Breast epithelium (tissue), 4 donors: ENCODE measurements at regions of chr12 and their contacts with region 1.

Region 1: DNA sequence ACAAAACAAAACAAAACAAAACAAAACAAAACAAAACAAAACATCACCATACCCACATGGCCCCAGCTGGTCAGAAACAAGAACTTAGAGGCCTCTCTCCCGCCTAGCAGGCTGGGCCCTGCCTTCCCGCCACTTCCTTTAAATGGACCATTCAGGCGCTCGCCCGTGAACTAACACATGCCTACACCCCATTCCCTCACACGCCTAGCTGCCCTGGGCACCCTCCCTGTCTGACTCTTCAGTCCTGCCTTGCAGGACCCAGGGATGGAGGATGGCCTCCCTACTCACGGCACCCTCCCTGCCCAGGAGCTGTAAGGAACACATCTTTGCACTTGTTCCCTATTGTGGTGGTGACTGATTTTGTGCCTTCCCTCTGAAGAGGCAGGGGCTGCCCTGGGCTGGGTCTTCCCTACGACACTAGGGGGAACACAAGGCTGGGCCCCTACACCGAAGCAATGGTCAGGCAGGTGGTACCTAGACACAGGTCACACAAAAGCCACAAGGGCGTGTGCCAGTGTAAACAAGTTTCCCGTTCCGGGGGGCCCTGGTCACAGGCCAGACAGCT is 21.5 kb downstream of the P2RX2 start:
- DNase-seq: no peak
- H3K4me3 ChIP-seq: no peak overlapping the region
- H3K27ac ChIP-seq: no peak overlapping the region
- H3K4me1 ChIP-seq: no peaks in the 10 kb centered on the region
- H3K27me3 ChIP-seq: no peaks in the 10 kb centered on the region
- CTCF ChIP-seq: no peak
- POLR2A ChIP-seq: no peak

Region 2: DNA sequence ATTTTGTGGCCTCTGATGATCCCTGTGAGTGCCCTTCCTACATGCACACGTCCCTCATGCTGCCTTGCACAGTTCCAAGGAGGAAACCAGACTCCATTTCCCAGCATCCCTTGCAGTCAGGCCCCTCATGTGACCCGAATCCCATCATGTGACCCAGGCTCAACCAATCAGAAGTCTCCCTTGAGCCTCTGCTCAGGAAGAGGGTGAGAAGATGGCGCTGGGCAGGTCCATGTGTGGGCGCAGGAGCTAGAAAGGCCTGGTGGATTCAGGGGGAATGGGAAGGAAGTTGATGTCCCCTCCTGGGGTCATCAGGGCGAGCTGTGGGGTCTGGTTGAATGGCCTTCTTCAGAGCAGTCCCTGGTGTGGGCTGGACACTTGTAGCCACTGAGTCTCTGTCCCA is 1445.9 kb before region 1 on chr12:
- intact Hi-C with region 1: no loop called
- DNase-seq: no peak
- H3K4me3 ChIP-seq: no peak overlapping the region
- H3K27ac ChIP-seq: no peak overlapping the region
- H3K4me1 ChIP-seq: no peaks in the 10 kb centered on the region
- H3K27me3 ChIP-seq: peaks cover 0 to 6% of the 10 kb centered on the region in 2 donors
- CTCF ChIP-seq: no peak
- POLR2A ChIP-seq: no peak

Region 3: GRCh38 chr12:132071040-132071810 is 568.8 kb before region 1 on chr12:
- intact Hi-C with region 1: loop called (anchors 5 kb)
- DNase-seq: no peak
- H3K4me3 ChIP-seq: no peak overlapping the region
- H3K27ac ChIP-seq: no peak overlapping the region
- H3K4me1 ChIP-seq: no peaks in the 10 kb centered on the region
- H3K27me3 ChIP-seq: no peaks in the 10 kb centered on the region
- CTCF ChIP-seq: no peak
- POLR2A ChIP-seq: no peak

Region 4: GRCh38 chr12:132672017-132672515 is 32.0 kb after region 1 on chr12:
- intact Hi-C with region 1: no loop called
- DNase-seq: no peak
- H3K4me3 ChIP-seq: no peak overlapping the region
- H3K27ac ChIP-seq: no peak overlapping the region
- H3K4me1 ChIP-seq: no peaks in the 10 kb centered on the region
- H3K27me3 ChIP-seq: no peaks in the 10 kb centered on the region
- CTCF ChIP-seq: no peak
- POLR2A ChIP-seq: no peak